Caco-2 (cell line): ENCODE measurements at regions of chr20 and their contacts with region 1.

Region 1: GRCh38 chr20:7094438-7094997 is 327.0 kb downstream of the BMP2 start:
- DNase-seq: peak; percentile 48 to 75
- H3K4me3 ChIP-seq: no peak overlapping the region
- H3K4me3 Mint-ChIP-seq: no peak overlapping the region
- H3K27ac Mint-ChIP-seq: no peak overlapping the region
- H3K4me1 ChIP-seq: peaks cover 21% of the 10 kb centered on the region
- H3K4me1 Mint-ChIP-seq: peaks cover 6% of the 10 kb centered on the region
- H3K27me3 ChIP-seq: no peaks in the 10 kb centered on the region
- H3K27me3 Mint-ChIP-seq: peaks cover 2% of the 10 kb centered on the region
- CTCF ChIP-seq: peak; percentile 85 to 88

Region 2: GRCh38 chr20:6178537-6178936 is 916.0 kb before region 1 on chr20:
- CTCF ChIA-PET with region 1: no interaction called
- POLR2A ChIA-PET with region 1: no interaction called
- intact Hi-C with region 1: loop called (anchors 5 kb)
- DNase-seq: peak in 1 of 2 experiments; percentile 29
- H3K4me3 ChIP-seq: no peak overlapping the region
- H3K4me3 Mint-ChIP-seq: no peak overlapping the region
- H3K27ac Mint-ChIP-seq: no peak overlapping the region
- H3K4me1 ChIP-seq: no peaks in the 10 kb centered on the region
- H3K4me1 Mint-ChIP-seq: no peaks in the 10 kb centered on the region
- H3K27me3 ChIP-seq: no peaks in the 10 kb centered on the region
- H3K27me3 Mint-ChIP-seq: peaks cover 12% of the 10 kb centered on the region
- CTCF ChIP-seq: peak; percentile 32 to 46

Region 3: GRCh38 chr20:6626805-6627204 is 467.7 kb before region 1 on chr20:
- CTCF ChIA-PET with region 1: no interaction called
- POLR2A ChIA-PET with region 1: no interaction called
- intact Hi-C with region 1: no loop called
- DNase-seq: no peak
- H3K4me3 ChIP-seq: no peak overlapping the region
- H3K4me3 Mint-ChIP-seq: no peak overlapping the region
- H3K27ac Mint-ChIP-seq: no peak overlapping the region
- H3K4me1 ChIP-seq: peaks cover 15% of the 10 kb centered on the region
- H3K4me1 Mint-ChIP-seq: no peaks in the 10 kb centered on the region
- H3K27me3 ChIP-seq: no peaks in the 10 kb centered on the region
- H3K27me3 Mint-ChIP-seq: no peaks in the 10 kb centered on the region
- CTCF ChIP-seq: no peak

Region 4: GRCh38 chr20:6944292-6944691 is 150.2 kb before region 1 on chr20:
- CTCF ChIA-PET with region 1: no interaction called
- POLR2A ChIA-PET with region 1: no interaction called
- intact Hi-C with region 1: no loop called
- DNase-seq: no peak
- H3K4me3 ChIP-seq: no peak overlapping the region
- H3K4me3 Mint-ChIP-seq: no peak overlapping the region
- H3K27ac Mint-ChIP-seq: no peak overlapping the region
- H3K4me1 ChIP-seq: no peaks in the 10 kb centered on the region
- H3K4me1 Mint-ChIP-seq: no peaks in the 10 kb centered on the region
- H3K27me3 ChIP-seq: peaks cover 1% of the 10 kb centered on the region; the same call in 1 of the 2 replicates
- H3K27me3 Mint-ChIP-seq: peaks cover 8% of the 10 kb centered on the region
- CTCF ChIP-seq: no peak

Region 5: GRCh38 chr20:6976530-6976929 is 118.0 kb before region 1 on chr20:
- CTCF ChIA-PET with region 1: no interaction called
- POLR2A ChIA-PET with region 1: no interaction called
- intact Hi-C with region 1: loop called (anchors 10 kb)
- DNase-seq: no peak
- H3K4me3 ChIP-seq: no peak overlapping the region
- H3K4me3 Mint-ChIP-seq: no peak overlapping the region
- H3K27ac Mint-ChIP-seq: no peak overlapping the region
- H3K4me1 ChIP-seq: no peaks in the 10 kb centered on the region
- H3K4me1 Mint-ChIP-seq: no peaks in the 10 kb centered on the region
- H3K27me3 ChIP-seq: no peaks in the 10 kb centered on the region
- H3K27me3 Mint-ChIP-seq: no peaks in the 10 kb centered on the region
- CTCF ChIP-seq: no peak

Region 6: DNA sequence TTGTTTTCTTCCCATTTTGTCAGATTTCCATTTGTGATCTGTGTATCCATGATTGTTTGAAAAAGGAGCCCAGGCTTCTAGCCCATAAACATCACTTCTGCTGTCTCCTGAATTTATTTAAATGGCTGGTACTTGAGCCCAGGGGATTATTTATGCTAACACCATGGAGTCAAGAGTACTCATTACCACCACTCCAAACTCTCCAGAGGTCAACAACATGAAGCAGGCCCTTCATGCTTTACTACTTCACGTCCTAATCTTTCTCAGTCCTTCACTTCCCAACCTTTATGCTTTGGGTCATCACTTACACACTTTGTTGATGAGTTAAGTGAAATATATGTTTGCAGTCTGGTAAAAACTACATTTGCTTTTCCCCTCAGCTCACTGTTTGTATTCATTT is 79.3 kb before region 1 on chr20:
- CTCF ChIA-PET with region 1: no interaction called
- POLR2A ChIA-PET with region 1: no interaction called
- intact Hi-C with region 1: no loop called
- DNase-seq: no peak
- H3K4me3 ChIP-seq: no peak overlapping the region
- H3K4me3 Mint-ChIP-seq: no peak overlapping the region
- H3K27ac Mint-ChIP-seq: no peak overlapping the region
- H3K4me1 ChIP-seq: no peaks in the 10 kb centered on the region
- H3K4me1 Mint-ChIP-seq: no peaks in the 10 kb centered on the region
- H3K27me3 ChIP-seq: no peaks in the 10 kb centered on the region
- H3K27me3 Mint-ChIP-seq: peaks cover 3% of the 10 kb centered on the region
- CTCF ChIP-seq: no peak

Region 7: GRCh38 chr20:7031222-7031621 is 63.3 kb before region 1 on chr20:
- CTCF ChIA-PET with region 1: no interaction called
- POLR2A ChIA-PET with region 1: no interaction called
- intact Hi-C with region 1: loop called (anchors 1 kb)
- DNase-seq: no peak
- H3K4me3 ChIP-seq: no peak overlapping the region
- H3K4me3 Mint-ChIP-seq: no peak overlapping the region
- H3K27ac Mint-ChIP-seq: no peak overlapping the region
- H3K4me1 ChIP-seq: no peaks in the 10 kb centered on the region
- H3K4me1 Mint-ChIP-seq: no peaks in the 10 kb centered on the region
- H3K27me3 ChIP-seq: no peaks in the 10 kb centered on the region; the same call in 1 of the 2 replicates
- H3K27me3 Mint-ChIP-seq: peaks cover 5% of the 10 kb centered on the region
- CTCF ChIP-seq: peak; percentile 37 to 51

Region 8: GRCh38 chr20:7195704-7196103 is 101.2 kb after region 1 on chr20:
- CTCF ChIA-PET with region 1: no interaction called
- POLR2A ChIA-PET with region 1: no interaction called
- intact Hi-C with region 1: no loop called
- DNase-seq: no peak
- H3K4me3 ChIP-seq: no peak overlapping the region
- H3K4me3 Mint-ChIP-seq: no peak overlapping the region
- H3K27ac Mint-ChIP-seq: no peak overlapping the region
- H3K4me1 ChIP-seq: no peaks in the 10 kb centered on the region
- H3K4me1 Mint-ChIP-seq: no peaks in the 10 kb centered on the region
- H3K27me3 ChIP-seq: no peaks in the 10 kb centered on the region
- H3K27me3 Mint-ChIP-seq: peaks cover 3% of the 10 kb centered on the region
- CTCF ChIP-seq: no peak